PC-3 (cell line): ENCODE measurements at regions of chr20 and their contacts with region 1.

Region 1: DNA sequence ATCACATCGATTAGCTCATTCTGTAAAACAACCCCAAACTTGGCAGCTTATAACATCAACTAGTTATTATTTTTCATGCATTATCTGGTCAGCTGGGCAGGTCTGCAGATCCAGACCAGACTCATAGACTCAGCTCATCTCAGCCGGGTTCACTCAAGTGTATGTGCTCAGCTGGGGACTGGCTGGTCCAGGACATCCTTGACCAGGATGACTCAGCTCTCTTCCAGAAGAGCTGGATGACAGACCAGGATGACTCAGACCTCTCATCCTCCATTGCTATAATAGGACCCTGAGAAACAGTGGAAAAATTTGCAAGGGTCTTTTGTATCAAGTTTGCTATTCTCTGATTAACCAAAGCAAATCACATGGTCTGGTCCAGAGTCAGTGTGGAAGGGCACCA is 312.5 kb upstream of the PLCB4 start:
- DNase-seq: peak; percentile 77
- ATAC-seq: peak; percentile 94
- H3K4me3 ChIP-seq: no peak overlapping the region
- H3K27ac ChIP-seq: no peak overlapping the region
- H3K4me1 ChIP-seq: no peaks in the 10 kb centered on the region; the same call in 1 of the 2 replicates
- H3K27me3 ChIP-seq: no peaks in the 10 kb centered on the region
- CTCF ChIP-seq: no peak

Region 2: GRCh38 chr20:8693709-8694108 is 62.7 kb before region 1 on chr20:
- CTCF ChIA-PET with region 1: no interaction called
- POLR2A ChIA-PET with region 1: no interaction called
- intact Hi-C with region 1: no loop called
- DNase-seq: no peak
- ATAC-seq: no peak
- H3K4me3 ChIP-seq: no peak overlapping the region
- H3K27ac ChIP-seq: no peak overlapping the region
- H3K4me1 ChIP-seq: no peaks in the 10 kb centered on the region
- H3K27me3 ChIP-seq: no peaks in the 10 kb centered on the region
- CTCF ChIP-seq: no peak

Region 3: DNA sequence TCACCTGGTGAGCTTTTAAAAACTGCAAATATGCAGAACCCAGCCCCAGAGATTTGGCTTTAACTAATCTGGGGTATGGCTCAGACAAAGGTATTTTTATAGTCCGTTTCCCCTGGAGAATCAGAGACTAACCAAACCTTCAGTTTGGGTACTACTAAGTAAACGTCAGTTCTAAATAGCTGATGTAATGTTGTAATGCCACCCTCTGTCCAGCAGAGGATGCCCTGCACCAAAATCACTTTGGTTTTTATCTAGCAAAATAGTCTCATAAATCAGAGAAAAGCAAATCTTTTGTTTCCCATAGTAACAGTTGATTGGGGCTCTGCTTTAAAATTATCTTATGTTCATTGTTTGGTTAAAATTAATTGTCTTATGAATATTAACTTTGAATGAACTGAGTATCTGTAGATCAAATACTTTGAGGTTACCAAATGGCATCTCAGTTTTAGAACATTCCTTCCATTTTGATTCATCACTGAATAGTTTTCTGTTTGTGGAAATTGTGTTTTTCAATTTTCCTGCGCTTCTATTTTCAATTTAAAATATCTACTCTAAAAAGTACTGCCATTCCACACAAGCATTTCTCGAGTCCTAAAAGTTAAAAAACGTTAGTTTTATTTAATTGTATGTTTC is 34.1 kb after region 1 on chr20:
- CTCF ChIA-PET with region 1: interaction called, 12 read pairs
- POLR2A ChIA-PET with region 1: no interaction called
- intact Hi-C with region 1: no loop called
- DNase-seq: peak; percentile 81
- ATAC-seq: peak; percentile 70
- H3K4me3 ChIP-seq: no peak overlapping the region
- H3K27ac ChIP-seq: no peak overlapping the region
- H3K4me1 ChIP-seq: no peaks in the 10 kb centered on the region
- H3K27me3 ChIP-seq: no peaks in the 10 kb centered on the region
- CTCF ChIP-seq: peak; percentile 98

Region 4: GRCh38 chr20:9359561-9360308 is 603.3 kb after region 1 on chr20:
- CTCF ChIA-PET with region 1: no interaction called
- POLR2A ChIA-PET with region 1: no interaction called
- intact Hi-C with region 1: loop called (anchors 2 kb)
- DNase-seq: peak; percentile 78
- ATAC-seq: peak; percentile 78
- H3K4me3 ChIP-seq: no peak overlapping the region
- H3K27ac ChIP-seq: no peak overlapping the region
- H3K4me1 ChIP-seq: no peaks in the 10 kb centered on the region
- H3K27me3 ChIP-seq: no peaks in the 10 kb centered on the region
- CTCF ChIP-seq: peak; percentile 85

Region 5: GRCh38 chr20:9392892-9393857 is 636.8 kb after region 1 on chr20:
- CTCF ChIA-PET with region 1: interaction called, 4 read pairs
- POLR2A ChIA-PET with region 1: no interaction called
- intact Hi-C with region 1: loop called (anchors 1 kb)
- DNase-seq: peak; percentile 82
- ATAC-seq: peak; percentile 99
- H3K4me3 ChIP-seq: no peak overlapping the region
- H3K27ac ChIP-seq: no peak overlapping the region
- H3K4me1 ChIP-seq: no peaks in the 10 kb centered on the region
- H3K27me3 ChIP-seq: no peaks in the 10 kb centered on the region
- CTCF ChIP-seq: peak; percentile 93

Region 6: GRCh38 chr20:9474835-9475415 is 718.5 kb after region 1 on chr20:
- CTCF ChIA-PET with region 1: interaction called, 10 read pairs
- POLR2A ChIA-PET with region 1: no interaction called
- intact Hi-C with region 1: no loop called
- DNase-seq: peak; percentile 60
- ATAC-seq: peak; percentile 74
- H3K4me3 ChIP-seq: no peak overlapping the region
- H3K27ac ChIP-seq: no peak overlapping the region
- H3K4me1 ChIP-seq: peaks cover 8% of the 10 kb centered on the region; the same call in 1 of the 2 replicates
- H3K27me3 ChIP-seq: no peaks in the 10 kb centered on the region
- CTCF ChIP-seq: no peak

Region 7: DNA sequence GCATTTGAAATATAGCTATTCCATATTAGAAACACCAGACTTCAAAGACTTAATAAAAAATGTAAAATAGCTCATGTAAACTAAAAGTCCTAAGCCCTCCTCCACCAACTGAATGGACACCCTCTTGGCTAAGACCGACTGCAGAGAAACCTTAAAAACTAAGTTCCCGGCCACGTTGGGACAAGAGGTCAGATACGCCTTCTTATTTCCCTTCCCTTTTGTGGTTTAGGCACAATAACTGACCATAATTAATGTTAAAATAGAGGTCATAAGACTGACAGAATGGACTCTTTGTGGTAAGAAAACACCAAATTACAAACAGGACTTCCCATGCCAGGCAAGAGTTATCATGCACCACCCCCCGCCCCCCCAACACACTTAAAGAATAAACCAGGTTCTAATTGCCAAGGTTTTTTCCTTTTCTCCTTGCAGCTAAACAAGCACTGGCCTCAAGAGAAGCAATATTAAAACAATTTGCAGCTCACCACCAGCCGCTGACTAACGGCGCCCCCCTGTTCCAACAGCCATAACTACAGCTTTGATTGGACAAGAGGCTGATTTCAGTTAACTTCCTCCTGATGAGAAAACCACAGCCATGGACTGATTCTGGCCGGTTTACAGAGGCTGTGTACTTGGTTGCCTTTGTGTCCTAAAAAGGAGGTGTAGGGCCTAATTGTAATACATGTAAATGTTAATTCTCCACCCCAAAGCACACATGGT is 747.3 kb after region 1 on chr20:
- CTCF ChIA-PET with region 1: interaction called, 12 read pairs
- POLR2A ChIA-PET with region 1: no interaction called
- intact Hi-C with region 1: no loop called
- DNase-seq: no peak
- ATAC-seq: no peak
- H3K4me3 ChIP-seq: no peak overlapping the region
- H3K27ac ChIP-seq: no peak overlapping the region
- H3K4me1 ChIP-seq: no peaks in the 10 kb centered on the region
- H3K27me3 ChIP-seq: no peaks in the 10 kb centered on the region
- CTCF ChIP-seq: peak; percentile 46; the same call in 1 of the 2 replicates